Mammary epithelial cell (primary cell): ENCODE measurements at regions of chr3 and their contacts with region 1.

Region 1: DNA sequence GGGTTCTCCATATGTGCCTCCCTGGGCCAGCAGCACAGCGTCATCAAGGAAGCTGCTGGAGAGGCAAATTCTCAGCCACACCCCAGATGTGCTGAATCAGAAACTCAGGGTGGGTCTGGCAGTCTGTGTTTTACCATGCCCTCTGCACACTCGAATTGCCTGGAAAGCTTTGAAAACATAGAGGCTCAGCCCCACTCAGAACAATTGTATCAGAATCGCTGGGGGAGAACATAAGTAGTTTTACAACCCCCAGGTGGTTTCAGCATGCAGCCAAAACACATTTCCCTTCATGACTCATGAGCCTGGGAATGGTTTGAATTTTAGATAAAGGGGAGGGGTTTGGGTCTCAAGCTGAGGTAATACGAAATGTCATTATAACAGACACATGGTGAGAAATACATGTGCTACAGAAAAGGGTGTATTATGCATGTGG is 9.6 kb downstream of the TGM4 start:
- DNase-seq: peak; percentile 97
- H3K4me3 ChIP-seq: no peak overlapping the region
- H3K27ac ChIP-seq: peak overlapping the region; percentile 92
- H3K4me1 ChIP-seq: peaks cover 55% of the 10 kb centered on the region
- H3K27me3 ChIP-seq: no peaks in the 10 kb centered on the region
- CTCF ChIP-seq: no peak

Region 2: DNA sequence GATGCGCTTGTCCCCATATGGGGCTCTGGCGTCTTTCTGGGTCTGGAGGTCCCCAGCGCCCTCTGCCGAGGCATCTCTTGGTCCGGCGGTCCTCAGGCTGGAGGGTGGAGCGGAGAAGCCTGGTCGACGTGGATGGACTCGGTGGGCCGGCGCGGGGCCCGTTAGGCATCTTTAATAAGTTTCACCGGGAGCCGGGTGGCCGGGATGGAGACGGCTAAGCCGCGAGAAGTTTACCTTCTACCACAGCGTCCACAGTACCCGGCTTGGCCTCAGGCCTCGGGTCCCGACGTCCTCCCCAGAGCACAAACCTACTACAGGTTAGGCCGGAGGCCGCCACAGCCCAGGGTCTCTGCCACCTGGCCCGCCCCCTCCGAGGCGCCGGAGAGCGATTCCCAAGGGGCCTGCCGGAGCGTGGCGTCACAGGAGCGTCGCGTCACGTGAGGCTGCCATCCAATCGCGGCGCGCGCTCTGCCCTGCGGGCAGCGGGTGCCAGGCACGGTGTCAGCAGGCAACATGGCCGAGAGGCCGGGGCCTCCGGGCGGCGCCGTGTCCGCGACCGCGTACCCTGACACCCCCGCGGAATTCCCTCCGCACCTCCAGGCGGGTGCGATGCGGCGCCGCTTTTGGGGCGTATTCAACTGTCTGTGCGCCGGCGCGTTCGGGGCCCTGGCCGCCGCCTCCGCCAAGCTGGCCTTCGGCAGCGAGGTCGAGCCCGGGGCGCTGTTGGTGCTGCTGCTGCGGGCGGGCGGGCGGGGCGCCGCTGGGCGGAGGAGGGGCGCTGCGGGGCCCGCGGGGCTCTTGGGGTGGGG is 22.4 kb before region 1 on chr3 and contains the start of gene TMEM42:
- CTCF ChIA-PET with region 1: no interaction called
- dilution Hi-C with region 1: no loop called
- in situ Hi-C with region 1: no loop called
- intact Hi-C with region 1: loop called (anchors 2 kb)
- DNase-seq: peak; percentile 73
- H3K4me3 ChIP-seq: peak within 1 kb of the TSS; percentile 15 to 57 (median 43)
- H3K27ac ChIP-seq: no peak within 1 kb of the TSS
- H3K4me1 ChIP-seq: peaks cover 4% of the 10 kb centered on the region
- H3K27me3 ChIP-seq: no peaks in the 10 kb centered on the region
- CTCF ChIP-seq: no peak
- total RNA-seq, gene TMEM42: 11.8 to 12.9 TPM

Region 3: DNA sequence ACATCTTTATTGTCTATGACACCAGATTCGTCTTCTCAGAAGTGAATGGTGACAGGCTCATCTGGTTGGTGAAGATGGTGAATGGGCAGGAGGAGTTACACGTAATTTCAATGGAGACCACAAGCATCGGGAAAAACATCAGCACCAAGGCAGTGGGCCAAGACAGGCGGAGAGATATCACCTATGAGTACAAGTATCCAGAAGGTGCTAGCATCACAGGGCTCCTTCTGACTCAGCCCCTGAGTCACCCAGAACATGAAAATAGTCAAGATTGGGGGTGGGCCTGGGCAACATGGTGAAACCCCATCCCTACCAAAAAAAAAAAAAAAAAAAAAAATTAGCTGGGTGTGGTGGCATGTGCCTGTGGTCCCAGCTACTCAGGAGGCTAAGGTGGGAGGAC is 23.0 kb after region 1 on chr3:
- CTCF ChIA-PET with region 1: no interaction called
- dilution Hi-C with region 1: no loop called
- in situ Hi-C with region 1: no loop called
- intact Hi-C with region 1: loop called (anchors 2 kb)
- DNase-seq: peak; percentile 92
- H3K4me3 ChIP-seq: no peak overlapping the region
- H3K27ac ChIP-seq: no peak overlapping the region
- H3K4me1 ChIP-seq: peaks cover 19% of the 10 kb centered on the region
- H3K27me3 ChIP-seq: no peaks in the 10 kb centered on the region
- CTCF ChIP-seq: no peak

Region 4: GRCh38 chr3:44926172-44926571 is 42.2 kb after region 1 on chr3:
- CTCF ChIA-PET with region 1: interaction called, 3 read pairs
- dilution Hi-C with region 1: loop called (anchors 5 kb)
- in situ Hi-C with region 1: no loop called
- intact Hi-C with region 1: no loop called
- DNase-seq: no peak
- H3K4me3 ChIP-seq: no peak overlapping the region
- H3K27ac ChIP-seq: no peak overlapping the region
- H3K4me1 ChIP-seq: peaks cover 3% of the 10 kb centered on the region
- H3K27me3 ChIP-seq: no peaks in the 10 kb centered on the region
- CTCF ChIP-seq: no peak